Activated CD4-positive, alpha-beta memory T cell treated with anti-CD3 and anti-CD28 coated beads for 36 hours (primary cell): ENCODE measurements at regions of chr20 and their contacts with region 1.

Region 1: DNA sequence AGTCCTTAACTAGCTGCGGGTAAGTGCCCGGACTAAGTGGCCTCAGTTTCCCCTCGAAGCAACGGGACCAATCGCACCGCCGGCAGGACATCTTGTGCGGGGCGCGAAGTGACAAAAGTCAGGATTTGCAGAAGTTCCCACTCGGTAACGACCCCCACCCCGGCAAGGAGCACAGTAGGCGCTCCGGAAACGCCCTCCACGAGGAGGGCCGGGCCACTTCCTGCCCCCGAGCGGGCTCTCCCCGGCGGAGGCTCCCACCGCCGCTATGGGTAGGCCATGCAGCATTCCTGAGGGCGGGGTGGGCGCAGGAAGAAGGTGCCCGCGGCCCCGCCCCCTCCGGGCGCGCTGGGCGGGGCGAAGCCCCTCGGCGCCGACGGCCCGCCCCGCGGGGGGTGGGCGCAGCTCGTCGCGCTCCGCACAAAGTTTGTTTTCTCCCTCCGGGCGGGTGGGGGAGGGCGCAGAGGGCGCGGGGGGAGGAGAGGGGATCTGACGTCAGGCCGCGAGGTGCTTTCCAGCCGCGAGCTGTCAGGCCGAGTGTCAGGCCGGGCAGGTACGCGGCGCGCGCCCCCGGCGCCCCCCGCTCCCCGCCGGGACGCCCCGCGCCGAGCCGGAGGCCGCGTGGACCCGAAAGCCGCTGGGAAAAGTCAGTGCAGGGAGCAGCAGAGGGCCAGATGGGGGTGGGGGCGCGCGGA is at the start of gene TGIF2:
- DNase-seq: peak; percentile 94
- H3K4me3 Mint-ChIP-seq: peak within 1 kb of the TSS; percentile 87
- H3K27ac Mint-ChIP-seq: peak within 1 kb of the TSS; percentile 92
- H3K4me1 Mint-ChIP-seq: peaks cover 33% of the 10 kb centered on the region
- H3K27me3 Mint-ChIP-seq: no peaks in the 10 kb centered on the region
- total RNA-seq, gene TGIF2: 39.7 to 43.0 TPM

Region 2: GRCh38 chr20:36460648-36461599 is 112.3 kb before region 1 on chr20:
- CTCF ChIA-PET with region 1: no interaction called
- POLR2A ChIA-PET with region 1: interaction called, 3 read pairs
- intact Hi-C with region 1: loop called (anchors 2 kb)
- DNase-seq: peak; percentile 91
- H3K4me3 Mint-ChIP-seq: peak overlapping the region; percentile 65
- H3K27ac Mint-ChIP-seq: peak overlapping the region; percentile 83
- H3K4me1 Mint-ChIP-seq: peaks cover 46% of the 10 kb centered on the region
- H3K27me3 Mint-ChIP-seq: no peaks in the 10 kb centered on the region

Region 3: GRCh38 chr20:36550797-36551299 is 22.4 kb before region 1 on chr20:
- CTCF ChIA-PET with region 1: interaction called, 3 read pairs
- POLR2A ChIA-PET with region 1: no interaction called
- intact Hi-C with region 1: loop called (anchors 1 kb)
- DNase-seq: no peak
- H3K4me3 Mint-ChIP-seq: no peak overlapping the region
- H3K27ac Mint-ChIP-seq: no peak overlapping the region
- H3K4me1 Mint-ChIP-seq: no peaks in the 10 kb centered on the region
- H3K27me3 Mint-ChIP-seq: no peaks in the 10 kb centered on the region

Region 4: DNA sequence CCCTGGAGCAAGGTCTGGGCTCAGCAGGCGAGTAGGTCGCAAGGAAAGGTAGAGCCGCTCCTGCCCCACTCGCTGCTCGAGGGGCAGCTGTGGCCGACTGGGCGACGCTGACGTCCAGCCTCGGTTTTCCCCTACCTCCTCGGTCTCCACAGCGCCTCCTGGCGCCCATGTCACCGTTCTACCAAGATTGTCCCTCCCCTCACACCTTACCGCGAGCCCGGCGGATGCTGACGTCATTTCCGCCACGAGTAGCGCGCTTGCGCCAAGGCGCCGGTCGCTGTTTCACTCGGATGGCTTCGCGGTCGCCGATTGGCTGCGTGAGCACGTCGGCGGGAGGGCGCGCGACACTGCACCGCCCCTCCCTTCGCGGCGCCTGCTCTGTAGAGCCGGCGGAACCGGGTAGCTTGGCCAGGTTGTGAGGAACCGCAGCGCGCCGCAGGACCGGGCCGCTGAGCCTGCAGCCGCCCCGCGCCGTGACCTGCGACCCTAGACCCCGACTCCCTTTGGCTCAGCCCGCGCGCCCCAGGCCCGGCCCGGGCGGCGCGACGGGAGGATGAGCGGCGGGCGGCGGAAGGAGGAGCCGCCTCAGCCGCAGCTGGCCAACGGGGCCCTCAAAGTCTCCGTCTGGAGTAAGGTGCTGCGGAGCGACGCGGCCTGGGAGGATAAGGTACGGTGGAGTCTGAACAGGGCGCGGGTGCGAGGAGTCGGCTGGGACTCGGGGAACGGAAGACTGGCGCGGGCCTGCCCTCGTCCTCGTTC is 32.3 kb after region 1 on chr20 and contains the start of gene RAB5IF:
- CTCF ChIA-PET with region 1: interaction called, 40 read pairs
- POLR2A ChIA-PET with region 1: interaction called, 51 read pairs
- intact Hi-C with region 1: loop called (anchors 1 kb)
- DNase-seq: peak; percentile 100
- H3K4me3 Mint-ChIP-seq: peak within 1 kb of the TSS; percentile 99
- H3K27ac Mint-ChIP-seq: peak within 1 kb of the TSS; percentile 97
- H3K4me1 Mint-ChIP-seq: peaks cover 28% of the 10 kb centered on the region
- H3K27me3 Mint-ChIP-seq: no peaks in the 10 kb centered on the region
- total RNA-seq, gene RAB5IF: 113 to 114 TPM